ENCODE measurements at regions of chr2 and their contacts with region 1.

Region 1: DNA sequence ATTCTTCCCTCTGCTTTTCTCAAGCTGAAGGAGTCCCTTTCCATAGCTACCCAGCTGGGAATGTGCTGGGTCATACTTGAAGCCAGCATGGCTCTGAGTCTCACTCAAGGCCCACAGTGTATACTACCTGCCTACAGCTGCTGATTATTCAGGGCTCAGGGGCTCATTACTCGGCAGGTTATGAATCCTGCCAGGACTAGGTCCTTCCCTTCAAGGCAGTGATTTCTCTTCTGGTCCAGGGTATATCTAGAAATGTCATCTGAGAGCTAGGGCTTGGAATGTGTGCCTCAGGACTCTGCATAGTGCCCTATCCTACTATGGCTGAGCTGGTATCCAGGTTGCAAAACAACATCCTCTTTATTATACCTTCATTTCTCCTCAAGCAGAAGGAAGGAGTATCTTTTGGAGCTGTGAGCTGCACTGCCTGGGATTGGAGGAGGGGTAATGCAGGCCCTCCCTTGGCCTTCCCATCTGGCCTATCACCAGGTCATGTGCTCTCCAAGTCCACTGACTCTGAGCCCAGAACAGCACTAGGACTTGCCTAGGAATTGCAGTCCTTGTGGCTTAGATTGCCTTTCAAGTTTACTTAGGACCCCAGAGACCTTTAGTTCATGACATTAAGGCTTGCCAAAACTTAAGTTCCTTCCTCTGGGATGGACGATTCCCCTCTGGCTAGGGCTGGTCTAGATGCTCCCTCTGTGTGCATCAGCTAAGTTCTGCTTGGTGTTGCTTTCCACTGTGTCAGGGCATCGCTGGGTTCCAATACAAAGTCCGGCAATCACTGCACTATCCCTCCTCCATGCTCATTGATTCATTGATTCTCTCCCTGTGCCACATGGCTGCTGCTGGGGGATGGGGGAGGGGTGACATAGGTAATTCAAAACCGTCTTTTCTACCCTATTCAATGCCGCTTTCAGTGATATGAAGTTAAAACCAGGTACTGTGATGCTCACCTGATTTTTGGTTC is 22.5 kb downstream of the IL1RN start:
- DNase-seq: no peak
- H3K4me3 ChIP-seq: no peak overlapping the region
- H3K27ac ChIP-seq: no peak overlapping the region
- H3K27me3 ChIP-seq: peaks cover 0 to 2% (median 0%) of the 10 kb centered on the region in 45 donors
- CTCF ChIP-seq: no peak

Region 2: GRCh38 chr2:113084241-113085000 is 65.5 kb before region 1 on chr2:
- intact Hi-C with region 1: no loop called
- DNase-seq: no peak
- H3K4me3 ChIP-seq: no peak overlapping the region
- H3K27ac ChIP-seq: no peak overlapping the region
- H3K27me3 ChIP-seq: peaks cover 0 to 8% (median 0%) of the 10 kb centered on the region in 45 donors
- CTCF ChIP-seq: peak in 27 of 56 donors; percentile 9 to 46 (median 27)

Region 3: GRCh38 chr2:113105047-113105785 is 44.7 kb before region 1 on chr2:
- intact Hi-C with region 1: no loop called
- DNase-seq: no peak
- H3K4me3 ChIP-seq: no peak overlapping the region
- H3K27ac ChIP-seq: no peak overlapping the region
- H3K27me3 ChIP-seq: peaks cover 0 to 6% (median 0%) of the 10 kb centered on the region in 45 donors
- CTCF ChIP-seq: no peak

Region 4: GRCh38 chr2:113185658-113186432 is 35.9 kb after region 1 on chr2:
- intact Hi-C with region 1: loop called in 1 of 2 experiments (anchors 5 kb)
- DNase-seq: peak in 1 of 10 donors; percentile 45
- H3K4me3 ChIP-seq: no peak overlapping the region
- H3K27ac ChIP-seq: no peak overlapping the region
- H3K27me3 ChIP-seq: no peaks in the 10 kb centered on the region
- CTCF ChIP-seq: no peak

Measured in dorsolateral prefrontal cortex (tissue), 120 donors.